CD8-positive, alpha-beta T cell (primary cell): ENCODE measurements at regions of chr1 and their contacts with region 1.

Region 1: GRCh38 chr1:54715493-54716298 is at the start of gene TTC4:
- DNase-seq: peak; percentile 68 to 92 (median 82)
- ATAC-seq: peak; percentile 98
- H3K4me3 ChIP-seq: peak within 1 kb of the TSS; percentile 77 to 95
- H3K4me3 Mint-ChIP-seq: peak within 1 kb of the TSS; percentile 86
- H3K27ac ChIP-seq: peak within 1 kb of the TSS; percentile 59 to 60
- H3K27ac Mint-ChIP-seq: peak within 1 kb of the TSS; percentile 85
- H3K4me1 ChIP-seq: peaks cover 18% of the 10 kb centered on the region
- H3K4me1 Mint-ChIP-seq: peaks cover 33% of the 10 kb centered on the region
- H3K27me3 ChIP-seq: no peaks in the 10 kb centered on the region
- H3K27me3 Mint-ChIP-seq: no peaks in the 10 kb centered on the region
- CTCF ChIP-seq: no peak
- total RNA-seq, gene TTC4: 7.8 to 7.9 TPM

Region 2: GRCh38 chr1:53837924-53838652 is 877.6 kb before region 1 on chr1 and contains the start of gene NDC1:
- CTCF ChIA-PET with region 1: no interaction called
- POLR2A ChIA-PET with region 1: no interaction called
- intact Hi-C with region 1: loop called in 1 of 2 experiments (anchors 5 kb)
- DNase-seq: peak; percentile 77 to 96 (median 88)
- ATAC-seq: peak; percentile 90
- H3K4me3 ChIP-seq: peak within 1 kb of the TSS; percentile 82 to 93
- H3K4me3 Mint-ChIP-seq: peak within 1 kb of the TSS; percentile 91
- H3K27ac ChIP-seq: peak within 1 kb of the TSS; percentile 91 to 100
- H3K27ac Mint-ChIP-seq: peak within 1 kb of the TSS; percentile 98
- H3K4me1 ChIP-seq: peaks cover 16% of the 10 kb centered on the region
- H3K4me1 Mint-ChIP-seq: peaks cover 26% of the 10 kb centered on the region
- H3K27me3 ChIP-seq: no peaks in the 10 kb centered on the region
- H3K27me3 Mint-ChIP-seq: peaks cover 3% of the 10 kb centered on the region
- CTCF ChIP-seq: no peak
- total RNA-seq, gene NDC1: 6.1 to 6.6 TPM

Region 3: DNA sequence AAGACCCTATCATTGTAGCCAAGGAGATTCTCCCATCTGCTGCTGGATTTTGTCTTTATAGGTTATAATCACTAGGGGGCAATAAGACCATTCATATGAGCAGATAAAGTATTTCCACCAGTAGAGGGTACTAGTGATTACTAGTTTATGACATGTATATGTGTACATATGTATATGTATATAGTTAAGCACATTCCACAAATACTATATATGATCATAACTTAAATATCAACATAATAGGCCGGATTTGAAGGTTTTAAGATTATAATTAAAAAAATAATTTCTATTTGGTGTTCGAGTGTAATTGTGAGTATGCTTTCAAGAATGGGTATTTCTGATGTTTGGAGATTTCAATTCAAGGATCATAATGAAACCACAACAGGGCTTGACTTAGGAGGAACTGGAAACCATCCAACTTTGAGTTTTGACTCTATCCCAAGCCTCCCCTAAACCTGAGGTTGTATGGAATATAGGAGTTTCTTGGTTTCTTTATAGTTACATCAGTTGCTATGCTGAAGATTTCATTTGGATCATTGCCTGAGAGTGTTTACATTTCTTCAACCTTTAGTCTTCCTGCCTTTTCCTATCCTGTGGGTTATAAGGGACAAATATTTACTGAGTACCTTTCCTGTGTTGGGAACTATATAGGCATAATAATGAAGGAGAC is 645.4 kb before region 1 on chr1:
- CTCF ChIA-PET with region 1: no interaction called
- POLR2A ChIA-PET with region 1: no interaction called
- intact Hi-C with region 1: loop called in 1 of 2 experiments (anchors 5 kb)
- DNase-seq: peak in 2 of 9 experiments; percentile 62 to 75
- ATAC-seq: peak; percentile 89
- H3K4me3 ChIP-seq: no peak overlapping the region
- H3K4me3 Mint-ChIP-seq: no peak overlapping the region
- H3K27ac ChIP-seq: no peak overlapping the region
- H3K27ac Mint-ChIP-seq: no peak overlapping the region
- H3K4me1 ChIP-seq: no peaks in the 10 kb centered on the region
- H3K4me1 Mint-ChIP-seq: no peaks in the 10 kb centered on the region
- H3K27me3 ChIP-seq: no peaks in the 10 kb centered on the region
- H3K27me3 Mint-ChIP-seq: no peaks in the 10 kb centered on the region
- CTCF ChIP-seq: peak; percentile 85

Region 4: DNA sequence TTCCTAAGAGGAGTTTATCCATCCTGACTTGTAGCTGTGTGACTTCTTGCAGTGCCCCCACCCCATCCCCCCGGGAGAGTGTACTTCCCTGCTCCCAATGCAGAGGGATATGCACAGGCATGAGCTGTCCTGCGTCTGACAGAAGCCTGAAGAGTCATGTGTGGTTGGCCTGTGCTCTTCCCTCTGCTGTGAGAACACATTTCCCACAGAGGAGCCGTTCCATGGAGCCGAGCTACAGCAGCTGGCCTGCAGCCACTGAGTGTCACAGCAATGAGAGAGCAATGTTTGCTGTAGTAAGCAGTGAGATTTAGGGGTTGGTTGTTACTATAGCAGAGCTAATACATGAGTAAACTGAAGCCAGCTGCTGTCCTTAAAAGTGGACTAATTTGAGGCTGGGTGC is 26.6 kb after region 1 on chr1:
- CTCF ChIA-PET with region 1: no interaction called
- POLR2A ChIA-PET with region 1: no interaction called
- intact Hi-C with region 1: no loop called
- DNase-seq: no peak
- ATAC-seq: no peak
- H3K4me3 ChIP-seq: no peak overlapping the region
- H3K4me3 Mint-ChIP-seq: no peak overlapping the region
- H3K27ac ChIP-seq: no peak overlapping the region
- H3K27ac Mint-ChIP-seq: no peak overlapping the region
- H3K4me1 ChIP-seq: no peaks in the 10 kb centered on the region
- H3K4me1 Mint-ChIP-seq: no peaks in the 10 kb centered on the region
- H3K27me3 ChIP-seq: no peaks in the 10 kb centered on the region
- H3K27me3 Mint-ChIP-seq: no peaks in the 10 kb centered on the region
- CTCF ChIP-seq: no peak

Region 5: DNA sequence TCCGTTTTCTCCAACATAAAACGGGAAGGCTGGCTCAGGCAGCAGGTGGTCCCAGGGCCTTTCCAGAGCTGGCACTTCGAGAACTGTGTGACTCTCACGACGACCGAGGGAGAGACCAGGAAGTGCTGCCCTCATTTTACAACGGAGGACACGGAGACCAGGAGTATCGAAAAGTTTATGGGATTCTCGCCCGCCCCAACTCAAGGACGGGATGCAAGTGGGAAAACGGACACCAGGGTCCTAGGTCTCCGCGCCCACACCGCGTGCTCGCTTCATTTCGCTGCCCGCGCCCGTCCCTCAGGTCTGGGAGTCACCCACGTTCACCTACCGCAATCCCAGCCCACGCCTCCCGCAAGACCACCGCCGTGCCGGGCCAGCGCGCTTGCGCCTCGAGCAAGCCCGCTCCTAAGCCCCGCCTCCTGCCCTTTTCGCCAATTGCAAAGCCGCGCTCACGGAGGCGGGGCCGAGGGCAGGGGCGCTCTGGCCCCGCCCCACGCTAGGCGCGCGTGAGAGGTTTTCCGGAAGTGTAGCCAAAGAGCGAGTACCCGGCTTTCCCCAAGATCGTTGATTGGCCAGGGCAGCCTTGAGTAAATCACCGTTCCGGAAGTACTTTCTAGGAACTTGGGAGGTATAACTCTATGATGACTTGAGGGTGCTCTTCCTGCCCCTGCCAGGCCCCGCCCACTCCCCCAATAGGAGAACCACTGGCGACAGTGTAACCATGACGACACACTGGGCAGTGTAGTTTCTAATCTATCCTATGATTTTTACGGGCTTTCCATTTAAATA is 48.6 kb after region 1 on chr1 and contains the start of gene PARS2:
- CTCF ChIA-PET with region 1: interaction called, 4 read pairs
- POLR2A ChIA-PET with region 1: interaction called, 3 read pairs
- intact Hi-C with region 1: loop called (anchors 1 kb)
- DNase-seq: peak; percentile 86 to 99 (median 95)
- ATAC-seq: peak; percentile 93
- H3K4me3 ChIP-seq: peak within 1 kb of the TSS; percentile 87 to 97
- H3K4me3 Mint-ChIP-seq: peak within 1 kb of the TSS; percentile 96
- H3K27ac ChIP-seq: peak within 1 kb of the TSS; percentile 62 to 65
- H3K27ac Mint-ChIP-seq: peak within 1 kb of the TSS; percentile 91
- H3K4me1 ChIP-seq: peaks cover 10% of the 10 kb centered on the region
- H3K4me1 Mint-ChIP-seq: peaks cover 20% of the 10 kb centered on the region
- H3K27me3 ChIP-seq: no peaks in the 10 kb centered on the region
- H3K27me3 Mint-ChIP-seq: no peaks in the 10 kb centered on the region
- CTCF ChIP-seq: no peak
- total RNA-seq, gene PARS2: not detected

Region 6: GRCh38 chr1:55230659-55231058 is 515.0 kb after region 1 on chr1:
- CTCF ChIA-PET with region 1: no interaction called
- POLR2A ChIA-PET with region 1: no interaction called
- intact Hi-C with region 1: no loop called
- DNase-seq: no peak
- ATAC-seq: no peak
- H3K4me3 ChIP-seq: no peak overlapping the region
- H3K4me3 Mint-ChIP-seq: no peak overlapping the region
- H3K27ac ChIP-seq: no peak overlapping the region
- H3K27ac Mint-ChIP-seq: no peak overlapping the region
- H3K4me1 ChIP-seq: no peaks in the 10 kb centered on the region
- H3K4me1 Mint-ChIP-seq: no peaks in the 10 kb centered on the region
- H3K27me3 ChIP-seq: no peaks in the 10 kb centered on the region
- H3K27me3 Mint-ChIP-seq: no peaks in the 10 kb centered on the region
- CTCF ChIP-seq: no peak